Upper lobe of right lung (tissue), 1 donor: ENCODE measurements at regions of chrX and their contacts with region 1.

Region 1: GRCh38 chrX:107676559-107677378 is 48.5 kb downstream of the PRPS1 start:
- DNase-seq: peak; percentile 95
- ATAC-seq: peak; percentile 75
- H3K4me3 ChIP-seq: peak overlapping the region; percentile 60
- H3K27ac ChIP-seq: peak overlapping the region; percentile 98
- H3K4me1 ChIP-seq: peaks cover 23% of the 10 kb centered on the region
- H3K27me3 ChIP-seq: no peaks in the 10 kb centered on the region
- CTCF ChIP-seq: no peak

Region 2: GRCh38 chrX:107154787-107155620 is 521.8 kb before region 1 on chrX:
- intact Hi-C with region 1: no loop called
- DNase-seq: no peak
- ATAC-seq: no peak
- H3K4me3 ChIP-seq: no peak overlapping the region
- H3K27ac ChIP-seq: no peak overlapping the region
- H3K4me1 ChIP-seq: no peaks in the 10 kb centered on the region
- H3K27me3 ChIP-seq: no peaks in the 10 kb centered on the region
- CTCF ChIP-seq: no peak

Region 3: GRCh38 chrX:107710617-107711391 is 34.0 kb after region 1 on chrX:
- intact Hi-C with region 1: loop called (anchors 5 kb)
- DNase-seq: no peak
- ATAC-seq: peak; percentile 77
- H3K4me3 ChIP-seq: no peak overlapping the region
- H3K27ac ChIP-seq: peak overlapping the region; percentile 98
- H3K4me1 ChIP-seq: peaks cover 18% of the 10 kb centered on the region
- H3K27me3 ChIP-seq: no peaks in the 10 kb centered on the region
- CTCF ChIP-seq: no peak